Activated CD4-positive, alpha-beta T cell treated with anti-CD3 and anti-CD28 coated beads, Interleukin-2, amount 10 ng/mL, durations not matched to agents 24 days and 14 days (primary cell): ENCODE measurements at regions of chr7 and their contacts with region 1.

Region 1: DNA sequence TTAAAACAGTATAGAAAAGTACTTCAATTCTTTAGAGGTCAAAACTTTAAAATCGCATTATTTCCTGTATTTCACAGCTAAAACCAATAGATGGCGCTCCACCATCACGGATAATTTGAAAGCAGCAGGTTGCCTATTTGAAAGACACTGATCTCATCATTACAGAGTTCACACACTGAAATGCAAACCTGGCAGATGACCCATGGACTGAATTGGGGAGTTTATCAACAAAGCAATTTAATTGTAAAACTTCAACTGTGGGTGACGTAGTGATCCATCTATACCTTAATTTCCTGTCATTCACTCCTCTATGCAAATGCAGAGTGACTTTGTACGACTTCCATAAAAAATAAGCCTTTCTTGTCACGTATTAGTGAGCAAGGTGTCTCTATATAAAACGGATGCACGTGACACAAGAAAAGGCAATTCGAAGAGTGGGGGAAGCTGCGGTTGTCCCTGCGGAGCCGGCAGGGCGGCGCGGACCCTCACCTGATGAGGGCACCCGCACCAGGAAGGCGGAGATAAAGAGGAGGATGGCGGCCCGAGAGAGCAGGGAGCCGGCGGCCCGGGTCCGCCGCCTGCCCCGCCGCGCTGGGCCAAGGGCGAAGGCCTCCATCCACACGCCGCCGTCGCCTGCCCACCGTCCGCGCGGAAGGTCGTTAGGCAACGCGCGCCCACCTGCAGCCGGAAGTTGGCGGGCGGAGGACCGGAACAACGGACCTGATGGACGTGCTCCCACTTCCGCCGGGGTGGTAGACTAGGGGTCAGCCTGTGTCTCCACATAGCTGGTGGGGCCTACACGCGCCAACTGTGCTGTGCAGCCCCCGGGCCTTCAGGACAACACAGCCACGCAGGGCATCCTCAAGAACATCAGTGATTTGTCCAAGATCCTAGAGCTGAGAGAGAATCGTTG is at the start of gene ZPBP:
- DNase-seq: peak; percentile 86
- H3K4me3 Mint-ChIP-seq: peak within 1 kb of the TSS; percentile 87
- H3K27ac Mint-ChIP-seq: peak within 1 kb of the TSS; percentile 69
- H3K4me1 Mint-ChIP-seq: peaks cover 4% of the 10 kb centered on the region
- H3K27me3 Mint-ChIP-seq: peaks cover 18% of the 10 kb centered on the region
- total RNA-seq, gene ZPBP: not detected in 2 replicates

Region 2: DNA sequence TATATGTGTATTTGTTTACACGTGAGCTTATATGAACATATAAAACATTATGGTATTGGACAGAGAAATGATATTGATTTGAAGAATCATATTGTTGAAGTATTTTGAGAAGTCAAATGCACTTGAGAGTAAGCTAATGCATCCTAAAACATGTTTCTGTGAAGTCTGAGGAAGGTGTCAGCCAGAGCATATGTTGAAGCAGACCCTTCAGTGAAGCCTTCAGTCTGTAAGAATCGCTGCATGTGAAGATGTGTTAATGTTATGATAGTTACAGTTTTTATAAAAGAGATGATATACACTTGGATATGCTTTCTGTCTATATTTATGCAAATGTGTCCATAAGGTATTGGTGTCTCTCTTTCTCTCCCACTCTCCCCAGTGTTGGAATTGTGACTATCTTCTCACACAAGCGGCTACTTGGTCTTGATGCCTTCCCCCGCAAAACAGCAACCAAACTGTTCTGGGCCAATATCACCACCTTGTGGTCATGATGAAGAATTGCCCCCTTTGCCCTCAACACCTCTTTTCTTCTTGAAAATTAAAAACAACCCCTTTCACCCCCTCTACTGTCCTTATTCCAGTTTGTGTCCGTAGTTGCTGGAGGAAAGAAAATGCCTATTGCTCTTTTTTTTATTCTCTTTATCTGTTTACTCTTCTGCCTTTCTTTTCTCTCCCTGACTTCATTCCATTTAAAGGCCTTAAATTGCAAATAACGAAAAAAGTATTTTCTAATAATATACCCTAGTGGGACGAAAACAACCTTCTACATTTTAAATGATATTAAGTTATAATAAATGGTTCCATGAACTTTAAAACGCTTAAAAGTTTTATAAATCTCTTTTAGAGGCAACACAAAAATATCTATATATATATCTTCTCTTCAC is 276.6 kb after region 1 on chr7:
- intact Hi-C with region 1: loop called (anchors 2 kb)
- DNase-seq: peak; percentile 87
- H3K4me3 Mint-ChIP-seq: peak overlapping the region; percentile 55
- H3K27ac Mint-ChIP-seq: peak overlapping the region; percentile 45
- H3K4me1 Mint-ChIP-seq: peaks cover 85% of the 10 kb centered on the region
- H3K27me3 Mint-ChIP-seq: no peaks in the 10 kb centered on the region

Region 3: DNA sequence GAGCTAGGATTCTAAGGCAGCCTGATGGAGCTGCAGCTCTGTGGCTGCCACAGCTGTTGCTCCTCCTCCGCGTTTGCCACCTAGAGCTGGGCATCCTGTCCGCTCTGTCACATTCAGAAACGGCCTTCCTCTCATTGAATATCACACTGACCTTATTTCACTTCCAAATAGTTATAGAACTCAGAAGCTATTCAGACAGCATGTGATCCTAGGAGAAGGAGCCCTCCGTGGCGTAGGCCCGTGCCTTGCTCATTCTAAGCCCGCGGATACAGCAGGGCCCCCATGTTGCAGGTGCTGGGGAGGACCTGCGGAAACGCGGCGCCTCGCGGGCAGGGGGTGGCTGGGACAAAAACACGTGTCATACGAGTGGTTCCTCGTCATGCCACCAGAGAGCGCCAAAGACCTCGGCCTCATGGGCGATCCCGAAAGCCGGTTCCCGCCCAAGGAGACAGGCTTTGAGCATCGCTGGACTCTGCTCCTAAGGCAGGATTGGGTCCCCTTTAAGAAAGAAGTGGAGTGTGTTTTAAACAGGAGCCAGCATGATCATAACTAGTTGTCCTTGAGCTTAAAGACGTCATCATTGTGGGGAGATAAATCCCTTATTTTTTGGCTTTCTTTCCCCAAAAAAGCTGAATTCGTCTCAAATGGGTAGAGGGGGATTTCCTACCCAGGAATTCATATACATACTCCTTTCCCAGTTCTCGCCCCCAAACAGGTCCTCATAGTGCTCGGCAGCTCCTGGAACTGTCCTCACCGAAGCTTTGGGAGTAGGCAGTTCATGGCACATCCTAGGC is 375.2 kb after region 1 on chr7:
- intact Hi-C with region 1: loop called (anchors 2 kb)
- DNase-seq: peak; percentile 94
- H3K4me3 Mint-ChIP-seq: peak overlapping the region; percentile 54
- H3K27ac Mint-ChIP-seq: peak overlapping the region; percentile 62
- H3K4me1 Mint-ChIP-seq: peaks cover 10% of the 10 kb centered on the region
- H3K27me3 Mint-ChIP-seq: peaks cover 18% of the 10 kb centered on the region

Region 4: GRCh38 chr7:50679218-50680007 is 586.6 kb after region 1 on chr7:
- intact Hi-C with region 1: loop called (anchors 2 kb)
- DNase-seq: no peak
- H3K4me3 Mint-ChIP-seq: no peak overlapping the region
- H3K27ac Mint-ChIP-seq: no peak overlapping the region
- H3K4me1 Mint-ChIP-seq: peaks cover 2% of the 10 kb centered on the region
- H3K27me3 Mint-ChIP-seq: peaks cover 18% of the 10 kb centered on the region

Region 5: DNA sequence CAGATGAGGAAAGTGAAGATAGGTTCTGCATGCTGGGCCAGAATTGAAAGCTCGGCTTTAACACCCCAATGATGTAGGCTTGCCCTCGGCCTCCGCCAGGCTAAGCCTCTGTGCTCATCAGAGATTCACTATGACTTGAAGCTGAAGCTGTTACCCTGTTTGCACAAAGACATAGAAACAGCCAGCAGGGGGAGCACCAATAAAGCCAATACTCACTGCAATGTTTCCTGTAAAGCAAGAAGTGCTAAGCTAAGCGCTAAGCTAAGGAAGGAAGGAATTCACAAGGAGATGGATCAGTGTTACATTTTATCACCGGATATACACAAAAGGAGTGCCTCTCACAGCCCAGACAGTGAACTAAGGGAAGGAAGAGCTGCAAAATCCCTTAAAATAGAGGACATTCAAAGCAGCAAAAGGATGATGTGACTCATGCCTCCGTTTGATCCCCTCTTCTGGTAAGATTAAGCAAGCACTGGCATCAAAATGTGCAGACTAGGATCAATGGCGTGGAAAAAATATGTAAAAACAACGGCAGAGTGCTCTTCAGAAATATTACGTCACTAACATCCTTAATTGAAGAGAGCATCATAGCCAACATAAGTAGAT is 1070.0 kb after region 1 on chr7:
- intact Hi-C with region 1: loop called (anchors 1 kb)
- DNase-seq: peak; percentile 91
- H3K4me3 Mint-ChIP-seq: no peak overlapping the region
- H3K27ac Mint-ChIP-seq: no peak overlapping the region
- H3K4me1 Mint-ChIP-seq: peaks cover 5% of the 10 kb centered on the region
- H3K27me3 Mint-ChIP-seq: peaks cover 28% of the 10 kb centered on the region